ENCODE measurements at regions of chr3 and their contacts with region 1.

Region 1: GRCh38 chr3:111723293-111724215 is 128.4 kb upstream of the ZBED2 start:
- DNase-seq: no peak
- ATAC-seq: no peak
- H3K4me3 ChIP-seq: no peak overlapping the region
- H3K4me3 Mint-ChIP-seq: no peak overlapping the region
- H3K27ac ChIP-seq: no peak overlapping the region
- H3K27ac Mint-ChIP-seq: no peak overlapping the region
- H3K4me1 ChIP-seq: no peaks in the 10 kb centered on the region
- H3K4me1 Mint-ChIP-seq: peaks cover 0 to 5% (median 2%) of the 10 kb centered on the region in 3 donors
- H3K27me3 ChIP-seq: no peaks in the 10 kb centered on the region
- H3K27me3 Mint-ChIP-seq: no peaks in the 10 kb centered on the region

Region 2: GRCh38 chr3:111803123-111803593 is 79.6 kb after region 1 on chr3:
- CTCF ChIA-PET with region 1: no interaction called
- POLR2A ChIA-PET with region 1: no interaction called
- DNase-seq: no peak
- ATAC-seq: no peak
- H3K4me3 ChIP-seq: no peak overlapping the region
- H3K4me3 Mint-ChIP-seq: no peak overlapping the region
- H3K27ac ChIP-seq: no peak overlapping the region
- H3K27ac Mint-ChIP-seq: no peak overlapping the region
- H3K4me1 ChIP-seq: no peaks in the 10 kb centered on the region
- H3K4me1 Mint-ChIP-seq: peaks cover 0 to under 1% (median 0%) of the 10 kb centered on the region in 3 donors
- H3K27me3 ChIP-seq: no peaks in the 10 kb centered on the region
- H3K27me3 Mint-ChIP-seq: peaks cover 0 to 2% of the 10 kb centered on the region in 2 donors

Region 3: GRCh38 chr3:111851511-111851954 is 128.0 kb after region 1 on chr3:
- CTCF ChIA-PET with region 1: no interaction called
- POLR2A ChIA-PET with region 1: interaction called in 1 of 2 experiments, 11 read pairs
- DNase-seq: no peak
- ATAC-seq: no peak
- H3K4me3 ChIP-seq: no peak overlapping the region
- H3K4me3 Mint-ChIP-seq: no peak overlapping the region
- H3K27ac ChIP-seq: no peak overlapping the region
- H3K27ac Mint-ChIP-seq: no peak overlapping the region
- H3K4me1 ChIP-seq: peaks cover 0 to 8% of the 10 kb centered on the region in 2 experiments
- H3K4me1 Mint-ChIP-seq: peaks cover 6 to 9% (median 6%) of the 10 kb centered on the region in 3 donors
- H3K27me3 ChIP-seq: no peaks in the 10 kb centered on the region
- H3K27me3 Mint-ChIP-seq: peaks cover 2 to 10% of the 10 kb centered on the region in 2 donors

Measured in T-cell (primary cell).